CD4-positive, alpha-beta memory T cell (primary cell): ENCODE measurements at regions of chr17 and their contacts with region 1.

Region 1: GRCh38 chr17:64420143-64420971 is 28.6 kb upstream of the MILR1 start:
- DNase-seq: peak in 4 of 5 donors; percentile 72 to 75 (median 73)
- H3K4me3 ChIP-seq: no peak overlapping the region
- H3K4me3 Mint-ChIP-seq: no peak overlapping the region
- H3K27ac ChIP-seq: no peak overlapping the region
- H3K27ac Mint-ChIP-seq: no peak overlapping the region
- H3K4me1 ChIP-seq: peaks cover 5% of the 10 kb centered on the region
- H3K4me1 Mint-ChIP-seq: peaks cover 0 to 3% (median 0%) of the 10 kb centered on the region in 4 donors
- H3K27me3 ChIP-seq: no peaks in the 10 kb centered on the region
- H3K27me3 Mint-ChIP-seq: peaks cover 0 to 1% of the 10 kb centered on the region in 2 donors

Region 2: GRCh38 chr17:64306850-64307463 is 113.4 kb before region 1 on chr17:
- CTCF ChIA-PET with region 1: interaction called, 257 read pairs
- POLR2A ChIA-PET with region 1: interaction called, 3 read pairs
- intact Hi-C with region 1: loop called (anchors 1 kb)
- DNase-seq: peak; percentile 54 to 61 (median 61)
- H3K4me3 ChIP-seq: no peak overlapping the region
- H3K4me3 Mint-ChIP-seq: no peak overlapping the region
- H3K27ac ChIP-seq: no peak overlapping the region
- H3K27ac Mint-ChIP-seq: no peak overlapping the region
- H3K4me1 ChIP-seq: no peaks in the 10 kb centered on the region
- H3K4me1 Mint-ChIP-seq: peaks cover 0 to 1% (median 0%) of the 10 kb centered on the region in 4 donors
- H3K27me3 ChIP-seq: no peaks in the 10 kb centered on the region
- H3K27me3 Mint-ChIP-seq: peaks cover 3% of the 10 kb centered on the region in 2 donors

Region 3: DNA sequence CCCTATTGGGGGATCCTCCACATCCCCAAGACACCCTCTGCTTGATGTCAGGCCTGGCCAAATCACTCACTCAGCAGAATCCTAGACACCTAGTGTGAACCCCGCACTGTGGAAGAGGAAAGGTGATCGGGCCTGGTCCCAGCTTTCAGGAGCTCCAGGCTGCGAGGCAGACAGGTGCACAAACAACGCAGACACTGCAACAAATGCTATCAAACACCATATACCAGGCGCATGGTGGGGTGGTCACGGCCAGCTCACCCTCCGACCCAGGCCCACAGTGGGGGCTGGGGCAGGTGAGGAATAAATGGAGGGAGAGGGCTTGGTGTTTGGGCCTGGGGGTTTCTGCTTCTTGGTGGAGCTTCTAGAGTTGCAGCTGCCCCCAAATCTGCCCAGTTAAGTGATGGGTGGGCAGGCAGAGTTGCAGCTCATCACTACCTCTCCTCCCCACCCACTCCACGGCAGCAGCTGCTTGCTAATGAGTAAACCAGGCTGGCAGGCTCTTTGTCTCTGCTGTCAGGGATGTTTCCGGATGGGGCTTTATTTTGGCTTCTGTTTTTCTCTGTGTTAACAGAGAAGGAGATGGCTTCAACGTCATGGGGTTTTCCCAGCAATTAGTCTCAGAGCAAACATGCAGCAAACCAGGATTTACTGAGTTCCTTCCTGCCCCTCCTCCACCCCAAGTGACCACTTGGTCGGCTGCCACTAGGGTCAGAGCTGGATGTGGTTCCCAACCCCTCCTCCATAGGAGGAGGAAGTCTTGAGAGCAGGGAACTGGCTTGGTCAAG is 76.3 kb before region 1 on chr17:
- CTCF ChIA-PET with region 1: interaction called, 13 read pairs
- POLR2A ChIA-PET with region 1: no interaction called
- intact Hi-C with region 1: loop called (anchors 1 kb)
- DNase-seq: peak; percentile 17 to 66 (median 21)
- H3K4me3 ChIP-seq: no peak overlapping the region
- H3K4me3 Mint-ChIP-seq: peak overlapping the region in 3 of 8 donors; percentile 15 to 55 (median 33)
- H3K27ac ChIP-seq: no peak overlapping the region
- H3K27ac Mint-ChIP-seq: peak overlapping the region; percentile 35 to 69 (median 64)
- H3K4me1 ChIP-seq: peaks cover 39% of the 10 kb centered on the region
- H3K4me1 Mint-ChIP-seq: peaks cover 15 to 32% (median 24%) of the 10 kb centered on the region in 4 donors
- H3K27me3 ChIP-seq: no peaks in the 10 kb centered on the region
- H3K27me3 Mint-ChIP-seq: no peaks in the 10 kb centered on the region

Region 4: DNA sequence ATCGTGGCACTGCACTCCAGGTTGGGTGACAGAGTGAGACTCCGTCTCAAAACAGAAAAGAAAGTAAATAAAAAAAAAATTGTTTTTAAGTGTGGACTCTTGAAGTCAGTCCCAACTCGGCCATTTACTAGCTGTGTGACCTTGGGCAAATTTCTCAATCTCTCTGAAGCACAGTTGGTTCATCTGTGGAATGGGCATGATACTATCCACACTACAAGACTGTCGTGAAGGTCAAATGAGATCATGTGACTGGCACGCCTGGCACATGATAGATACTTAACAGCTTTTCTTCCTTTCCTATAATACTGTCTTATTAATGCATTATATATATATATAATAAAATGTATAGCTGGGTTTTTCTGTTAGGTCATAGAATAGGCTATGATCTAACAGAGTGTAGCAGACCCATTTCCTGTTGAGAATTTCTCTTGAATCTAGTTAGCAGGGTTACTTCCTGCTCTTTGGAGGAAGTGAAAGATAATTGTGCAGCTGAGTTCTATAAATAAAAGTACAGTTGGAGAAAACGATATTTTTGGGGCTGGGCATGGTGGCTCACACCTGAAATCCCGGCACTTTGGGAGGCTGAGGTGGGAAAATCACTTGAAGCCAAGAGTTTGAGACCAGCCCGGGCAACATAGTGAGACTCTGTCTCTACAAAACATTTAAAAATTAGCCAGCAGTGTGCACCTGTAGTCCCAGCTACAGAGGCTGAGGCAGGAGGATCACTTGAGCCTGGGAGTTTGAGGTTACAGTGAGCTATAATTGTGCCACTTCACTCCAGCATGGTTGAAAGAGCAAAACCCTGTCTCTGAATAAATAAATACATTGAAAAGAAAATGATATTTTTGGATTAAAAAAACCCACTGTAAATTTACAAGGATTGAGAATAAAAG is 35.9 kb after region 1 on chr17:
- CTCF ChIA-PET with region 1: interaction called, 25 read pairs
- POLR2A ChIA-PET with region 1: interaction called, 3 read pairs
- intact Hi-C with region 1: no loop called
- DNase-seq: peak in 3 of 5 donors; percentile 10 to 21 (median 19)
- H3K4me3 ChIP-seq: no peak overlapping the region
- H3K4me3 Mint-ChIP-seq: peak overlapping the region in 7 of 8 donors; percentile 32 to 67 (median 62)
- H3K27ac ChIP-seq: no peak overlapping the region
- H3K27ac Mint-ChIP-seq: peak overlapping the region in 6 of 7 donors; percentile 61 to 92 (median 85)
- H3K4me1 ChIP-seq: peaks cover 17% of the 10 kb centered on the region
- H3K4me1 Mint-ChIP-seq: peaks cover 8 to 23% (median 17%) of the 10 kb centered on the region in 4 donors
- H3K27me3 ChIP-seq: no peaks in the 10 kb centered on the region
- H3K27me3 Mint-ChIP-seq: no peaks in the 10 kb centered on the region

Region 5: GRCh38 chr17:64506576-64507477 is 86.5 kb after region 1 on chr17 and contains the start of gene CEP95:
- CTCF ChIA-PET with region 1: interaction called, 48 read pairs
- POLR2A ChIA-PET with region 1: interaction called, 57 read pairs
- intact Hi-C with region 1: loop called (anchors 1 kb)
- DNase-seq: peak in 3 of 5 donors; percentile 92 to 98 (median 97)
- H3K4me3 ChIP-seq: peak within 1 kb of the TSS; percentile 89 to 97
- H3K4me3 Mint-ChIP-seq: peak within 1 kb of the TSS; percentile 95 to 100 (median 100)
- H3K27ac ChIP-seq: peak within 1 kb of the TSS; percentile 98
- H3K27ac Mint-ChIP-seq: peak within 1 kb of the TSS; percentile 98 to 100 (median 100)
- H3K4me1 ChIP-seq: peaks cover 49% of the 10 kb centered on the region
- H3K4me1 Mint-ChIP-seq: peaks cover 43 to 75% (median 56%) of the 10 kb centered on the region in 4 donors
- H3K27me3 ChIP-seq: no peaks in the 10 kb centered on the region
- H3K27me3 Mint-ChIP-seq: peaks cover 0 to 4% of the 10 kb centered on the region in 2 donors
- total RNA-seq, gene CEP95: 105 to 108 TPM

Region 6: GRCh38 chr17:64648234-64648633 is 227.9 kb after region 1 on chr17:
- CTCF ChIA-PET with region 1: interaction called, 52 read pairs
- POLR2A ChIA-PET with region 1: no interaction called
- intact Hi-C with region 1: loop called (anchors 1 kb)
- DNase-seq: no peak
- H3K4me3 ChIP-seq: no peak overlapping the region
- H3K4me3 Mint-ChIP-seq: no peak overlapping the region
- H3K27ac ChIP-seq: no peak overlapping the region
- H3K27ac Mint-ChIP-seq: peak overlapping the region in 1 of 7 donors; percentile 77
- H3K4me1 ChIP-seq: peaks cover 12% of the 10 kb centered on the region
- H3K4me1 Mint-ChIP-seq: peaks cover 12 to 38% (median 27%) of the 10 kb centered on the region in 4 donors
- H3K27me3 ChIP-seq: no peaks in the 10 kb centered on the region
- H3K27me3 Mint-ChIP-seq: no peaks in the 10 kb centered on the region

Region 7: GRCh38 chr17:64706224-64707018 is 286.1 kb after region 1 on chr17:
- CTCF ChIA-PET with region 1: no interaction called
- POLR2A ChIA-PET with region 1: no interaction called
- intact Hi-C with region 1: no loop called
- DNase-seq: no peak
- H3K4me3 ChIP-seq: no peak overlapping the region
- H3K4me3 Mint-ChIP-seq: no peak overlapping the region
- H3K27ac ChIP-seq: no peak overlapping the region
- H3K27ac Mint-ChIP-seq: peak overlapping the region in 2 of 7 donors; percentile 5 to 28
- H3K4me1 ChIP-seq: peaks cover 44% of the 10 kb centered on the region
- H3K4me1 Mint-ChIP-seq: peaks cover 37 to 47% (median 41%) of the 10 kb centered on the region in 4 donors
- H3K27me3 ChIP-seq: no peaks in the 10 kb centered on the region
- H3K27me3 Mint-ChIP-seq: no peaks in the 10 kb centered on the region